ENCODE measurements at regions of chr9 and their contacts with region 1.

Region 1: DNA sequence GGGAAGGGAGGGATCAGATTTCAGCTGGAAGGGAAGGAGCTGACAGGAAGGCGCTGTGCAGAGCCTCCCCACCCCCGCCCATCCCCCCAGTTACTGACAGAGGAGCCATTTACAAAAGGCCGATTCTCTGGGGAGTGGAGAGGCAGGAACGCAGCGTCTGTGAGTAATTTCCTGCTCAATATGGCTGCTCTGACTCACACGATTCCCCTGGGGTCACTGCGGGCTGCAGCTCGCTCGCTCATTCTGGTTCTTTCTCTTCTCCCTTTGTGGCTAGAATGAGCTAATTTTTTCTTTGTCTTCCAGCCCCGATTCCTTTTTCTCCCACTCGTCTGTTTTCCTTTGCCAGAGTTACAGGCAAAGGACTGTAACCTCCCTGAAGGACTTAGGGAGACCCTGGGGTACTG is 28.8 kb downstream of the PTPA start:
- DNase-seq: peak in 1 of 2 experiments; percentile 93
- H3K4me3 ChIP-seq: peak overlapping the region; percentile 29 to 55 (median 38); a peak in 7 of 8 replicates
- H3K27ac ChIP-seq: peak overlapping the region; percentile 96
- H3K4me1 ChIP-seq: peaks cover 28 to 46% (median 38%) of the 10 kb centered on the region in 4 experiments
- H3K27me3 ChIP-seq: no peaks in the 10 kb centered on the region
- CTCF ChIP-seq: no peak
- EP300 ChIP-seq: peak in 1 of 2 experiments; percentile 92; a peak in 2 of 3 replicates
- POLR2A ChIP-seq: peak in 1 of 2 experiments; percentile 83; a peak in 2 of 3 replicates
- RAD21 ChIP-seq: peak; percentile 1 to 20; a peak in 2 of 4 replicates

Region 2: GRCh38 chr9:129154866-129155477 is 15.0 kb after region 1 on chr9:
- CTCF ChIA-PET with region 1: interaction called, 831 read pairs
- POLR2A ChIA-PET with region 1: interaction called, 37 read pairs
- DNase-seq: no peak
- H3K4me3 ChIP-seq: no peak overlapping the region
- H3K27ac ChIP-seq: no peak overlapping the region
- H3K4me1 ChIP-seq: no peaks in the 10 kb centered on the region
- H3K27me3 ChIP-seq: no peaks in the 10 kb centered on the region; a peak in 1 of 7 replicates
- CTCF ChIP-seq: no peak
- EP300 ChIP-seq: no peak
- POLR2A ChIP-seq: no peak
- RAD21 ChIP-seq: no peak

Region 3: DNA sequence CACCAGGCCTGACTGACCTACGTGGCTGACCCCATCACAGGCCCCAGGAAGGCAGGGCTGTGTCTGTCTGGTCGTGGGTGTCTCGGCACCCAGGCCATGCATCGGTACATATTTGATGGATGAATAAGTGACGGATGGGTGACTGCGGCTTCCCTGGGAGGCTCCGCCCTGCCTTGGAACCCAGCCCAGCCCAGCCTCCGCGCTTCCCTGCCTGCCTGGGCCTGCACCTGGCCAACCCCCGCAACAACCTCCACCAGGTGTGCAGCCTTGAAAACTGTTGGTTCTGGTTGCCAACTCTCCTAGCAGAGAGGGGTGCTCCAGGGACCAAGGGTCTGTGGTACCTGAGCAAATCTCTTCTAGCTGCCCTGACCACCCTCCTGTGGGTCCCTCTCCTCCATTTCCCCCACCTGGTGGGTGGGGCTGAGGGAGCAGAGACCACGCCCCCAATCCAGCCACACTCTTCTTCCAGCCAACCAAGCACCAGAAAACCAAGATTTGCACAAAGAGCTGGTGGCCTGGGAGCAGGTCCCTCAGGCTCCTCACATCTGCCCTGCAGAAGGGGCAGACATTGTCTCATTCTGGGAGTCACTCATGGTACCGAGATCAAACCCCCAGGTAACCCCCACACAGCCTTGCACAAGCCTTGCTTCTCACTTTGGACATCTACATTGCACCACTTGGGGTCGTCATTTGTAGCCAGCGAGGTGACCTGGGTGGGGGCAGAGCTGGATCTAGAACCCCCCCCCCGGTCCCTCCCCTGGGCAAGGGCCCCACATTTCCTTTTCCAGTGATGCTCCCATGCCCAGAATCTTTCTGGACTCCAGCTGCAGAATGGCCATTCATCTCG is 138.6 kb after region 1 on chr9:
- CTCF ChIA-PET with region 1: interaction called, 10 read pairs
- POLR2A ChIA-PET with region 1: no interaction called
- DNase-seq: peak in 1 of 2 experiments; percentile 73
- H3K4me3 ChIP-seq: peak overlapping the region in 1 of 4 experiments; percentile 12; a peak in 2 of 8 replicates
- H3K27ac ChIP-seq: no peak overlapping the region
- H3K4me1 ChIP-seq: peaks cover 4 to 37% (median 18%) of the 10 kb centered on the region in 4 experiments
- H3K27me3 ChIP-seq: peaks cover 0 to 2% (median 0%) of the 10 kb centered on the region in 4 experiments; a peak in 3 of 7 replicates
- CTCF ChIP-seq: no peak
- EP300 ChIP-seq: no peak
- POLR2A ChIP-seq: no peak
- RAD21 ChIP-seq: no peak

Region 4: DNA sequence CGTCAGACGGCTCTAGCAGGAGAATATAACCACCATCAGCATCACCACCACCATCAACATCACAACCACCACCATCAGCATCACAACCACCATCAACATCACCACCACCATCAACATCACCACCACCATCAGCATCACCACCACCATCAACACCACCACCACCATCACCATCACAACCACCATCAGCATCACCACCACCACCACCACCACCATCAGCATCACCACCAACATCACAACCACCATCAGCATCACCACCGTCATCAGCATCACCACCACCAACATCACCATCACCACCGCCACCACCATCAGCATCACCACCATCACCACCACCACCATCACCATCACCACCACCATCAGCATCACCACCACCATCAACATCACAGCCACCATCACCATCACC is 270.2 kb after region 1 on chr9:
- CTCF ChIA-PET with region 1: no interaction called
- POLR2A ChIA-PET with region 1: no interaction called
- DNase-seq: no peak
- H3K4me3 ChIP-seq: no peak overlapping the region
- H3K27ac ChIP-seq: no peak overlapping the region
- H3K4me1 ChIP-seq: peaks cover 0 to 27% (median 20%) of the 10 kb centered on the region in 4 experiments; a peak in 6 of 7 replicates
- H3K27me3 ChIP-seq: peaks cover 0 to 4% (median 0%) of the 10 kb centered on the region in 4 experiments; a peak in 5 of 7 replicates
- CTCF ChIP-seq: no peak
- EP300 ChIP-seq: no peak
- POLR2A ChIP-seq: no peak
- RAD21 ChIP-seq: no peak

Region 5: DNA sequence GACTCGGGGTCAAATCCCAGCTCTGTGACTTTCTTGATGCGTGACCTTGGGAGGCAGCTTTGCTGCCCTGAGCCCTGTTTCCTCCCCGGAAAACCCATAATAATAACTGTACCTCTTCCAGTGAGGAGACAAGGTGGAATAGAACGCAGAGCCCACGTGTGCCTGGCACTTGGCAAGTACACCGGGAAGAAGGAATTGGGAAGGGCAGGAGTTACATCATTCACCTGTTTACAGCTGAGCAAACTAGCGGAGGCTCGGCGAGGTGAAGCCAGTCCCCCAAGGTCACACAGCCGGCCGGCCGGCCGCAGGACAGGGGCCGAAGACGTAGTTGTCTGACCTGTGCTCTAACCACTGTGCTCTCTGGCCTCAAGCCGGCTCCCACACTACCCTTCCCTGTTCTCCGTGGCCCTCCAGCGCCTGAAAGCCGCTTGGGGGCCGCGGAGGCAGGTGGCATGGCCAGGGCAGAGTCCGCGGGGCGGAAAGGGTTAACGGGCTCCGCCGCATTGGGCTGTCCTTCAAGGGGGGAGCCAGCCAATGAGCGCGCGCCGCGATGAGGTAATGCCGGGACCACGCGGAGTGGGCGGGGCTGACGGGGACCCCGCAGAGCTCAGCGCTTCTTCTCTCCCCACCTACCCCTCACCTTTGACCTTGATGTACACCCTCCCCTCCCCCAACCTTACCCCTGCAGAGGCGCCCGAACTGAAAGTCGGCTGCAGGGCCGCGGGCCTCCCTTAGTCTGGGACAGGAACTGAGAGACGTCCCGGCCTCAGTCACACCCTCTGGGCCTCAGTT is 355.7 kb after region 1 on chr9:
- CTCF ChIA-PET with region 1: interaction called, 19 read pairs
- POLR2A ChIA-PET with region 1: interaction called, 5 read pairs
- DNase-seq: peak; percentile 87 to 99
- H3K4me3 ChIP-seq: peak overlapping the region; percentile 39 to 66 (median 55)
- H3K27ac ChIP-seq: peak overlapping the region; percentile 30; the same call in 1 of the 2 replicates
- H3K4me1 ChIP-seq: peaks cover 2 to 41% (median 32%) of the 10 kb centered on the region in 4 experiments
- H3K27me3 ChIP-seq: peaks cover 0 to 16% (median 15%) of the 10 kb centered on the region in 4 experiments; a peak in 5 of 7 replicates
- CTCF ChIP-seq: no peak
- EP300 ChIP-seq: peak in 1 of 2 experiments; percentile 33; a peak in 1 of 3 replicates
- POLR2A ChIP-seq: no peak
- RAD21 ChIP-seq: peak in 1 of 2 experiments; percentile 15; a peak in 1 of 4 replicates

Region 6: GRCh38 chr9:129610473-129611301 is 470.7 kb after region 1 on chr9:
- CTCF ChIA-PET with region 1: interaction called, 25 read pairs
- POLR2A ChIA-PET with region 1: interaction called, 6 read pairs
- DNase-seq: peak in 1 of 2 experiments; percentile 96
- H3K4me3 ChIP-seq: peak overlapping the region; percentile 29 to 91 (median 63)
- H3K27ac ChIP-seq: no peak overlapping the region
- H3K4me1 ChIP-seq: peaks cover 0 to 21% (median 10%) of the 10 kb centered on the region in 4 experiments; a peak in 6 of 7 replicates
- H3K27me3 ChIP-seq: peaks cover 0 to 7% (median 4%) of the 10 kb centered on the region in 4 experiments; a peak in 5 of 7 replicates
- CTCF ChIP-seq: peak in 2 of 3 experiments; percentile 89 to 96; a peak in 3 of 4 replicates
- EP300 ChIP-seq: no peak
- POLR2A ChIP-seq: no peak
- RAD21 ChIP-seq: peak; percentile 90 to 95

Region 7: GRCh38 chr9:129626079-129626624 is 486.2 kb after region 1 on chr9 and contains the start of gene NTMT1:
- CTCF ChIA-PET with region 1: interaction called, 104 read pairs
- POLR2A ChIA-PET with region 1: interaction called, 4 read pairs
- DNase-seq: peak in 1 of 2 experiments; percentile 98
- H3K4me3 ChIP-seq: peak within 1 kb of the TSS; percentile 78 to 92 (median 83)
- H3K27ac ChIP-seq: peak within 1 kb of the TSS; percentile 88
- H3K4me1 ChIP-seq: peaks cover 10 to 19% (median 13%) of the 10 kb centered on the region in 4 experiments
- H3K27me3 ChIP-seq: peaks cover 3 to 9% (median 7%) of the 10 kb centered on the region in 4 experiments
- CTCF ChIP-seq: no peak
- EP300 ChIP-seq: no peak
- POLR2A ChIP-seq: peak; percentile 93 to 96
- RAD21 ChIP-seq: no peak
- total RNA-seq, gene NTMT1: 66.1 and 70.2 TPM in 2 replicates